AG04449 (cell line): ENCODE measurements at regions of chr5 and their contacts with region 1.

Region 1: GRCh38 chr5:114449860-114450421 is 88.1 kb downstream of the KCNN2 start:
- DNase-seq: no peak
- H3K4me3 ChIP-seq: no peak overlapping the region
- CTCF ChIP-seq: peak; percentile 92

Region 2: GRCh38 chr5:113612060-113612496 is 837.9 kb before region 1 on chr5:
- CTCF ChIA-PET with region 1: interaction called, 39 read pairs
- POLR2A ChIA-PET with region 1: no interaction called
- DNase-seq: no peak
- H3K4me3 ChIP-seq: no peak overlapping the region
- CTCF ChIP-seq: peak; percentile 31

Region 3: DNA sequence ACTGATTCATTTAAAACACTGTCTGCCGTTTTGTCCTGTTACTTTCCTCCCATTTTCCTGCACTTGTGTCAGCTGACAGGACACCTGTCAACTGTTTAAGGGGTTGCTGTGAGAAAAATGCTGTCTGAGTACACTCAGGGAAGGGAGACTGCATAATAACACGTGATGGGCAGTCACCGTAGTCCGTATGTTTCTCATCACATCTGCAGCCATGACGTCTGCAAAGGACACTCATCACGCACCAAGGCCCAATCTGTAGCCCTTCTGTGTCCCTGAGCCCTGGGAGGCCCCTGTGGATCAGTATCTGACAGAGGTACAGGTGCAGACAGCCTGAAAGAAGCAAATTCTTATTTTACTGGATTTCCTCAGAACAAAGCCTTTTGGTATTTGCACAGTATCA is 540.2 kb before region 1 on chr5:
- CTCF ChIA-PET with region 1: no interaction called
- POLR2A ChIA-PET with region 1: no interaction called
- DNase-seq: no peak
- H3K4me3 ChIP-seq: no peak overlapping the region
- CTCF ChIP-seq: no peak

Region 4: DNA sequence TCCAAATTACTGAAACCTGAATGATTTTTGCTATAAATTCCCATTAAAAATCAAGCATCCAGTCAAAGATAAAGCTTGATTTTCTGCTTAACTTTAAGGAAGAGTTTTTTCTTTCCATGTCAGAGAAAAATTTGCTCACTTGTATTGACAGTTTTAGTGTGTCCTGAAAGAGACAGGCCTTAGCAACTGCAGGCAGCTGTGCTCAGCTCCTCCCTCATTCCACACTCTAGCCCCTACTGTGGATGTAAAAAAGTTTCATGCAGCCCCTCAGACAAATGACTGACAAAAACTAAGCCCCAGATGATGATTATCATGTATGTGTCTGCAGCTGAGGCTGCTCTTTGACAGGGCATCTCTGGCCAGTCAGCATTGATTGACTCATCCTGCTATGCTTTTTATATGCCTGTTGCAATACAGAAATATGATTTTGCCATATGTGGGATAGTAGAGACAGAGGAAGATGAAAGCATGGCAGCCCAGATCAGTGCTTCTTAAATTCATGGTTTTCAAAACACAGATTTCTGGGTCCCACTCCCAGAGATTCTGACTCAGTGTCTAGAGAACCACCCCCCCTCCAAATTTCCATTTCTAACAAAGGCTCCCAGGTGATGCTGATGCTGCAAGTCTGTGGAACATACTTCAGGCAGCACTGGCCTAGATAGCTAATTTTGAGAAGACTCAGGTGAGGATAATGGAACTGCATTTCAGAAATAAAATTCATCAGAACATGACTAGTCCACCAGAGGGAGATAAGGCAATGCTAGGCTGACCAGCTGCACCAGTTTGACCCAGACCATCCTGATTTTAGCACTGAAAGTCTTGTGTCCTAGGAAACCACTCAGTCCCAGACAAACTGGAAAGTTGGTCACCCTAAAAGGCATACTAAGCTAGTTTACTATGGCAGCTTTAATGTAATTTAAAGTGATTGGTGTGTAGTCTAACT is 386.7 kb before region 1 on chr5:
- CTCF ChIA-PET with region 1: interaction called, 10 read pairs
- POLR2A ChIA-PET with region 1: no interaction called
- DNase-seq: no peak
- H3K4me3 ChIP-seq: no peak overlapping the region
- CTCF ChIP-seq: peak; percentile 19

Region 5: DNA sequence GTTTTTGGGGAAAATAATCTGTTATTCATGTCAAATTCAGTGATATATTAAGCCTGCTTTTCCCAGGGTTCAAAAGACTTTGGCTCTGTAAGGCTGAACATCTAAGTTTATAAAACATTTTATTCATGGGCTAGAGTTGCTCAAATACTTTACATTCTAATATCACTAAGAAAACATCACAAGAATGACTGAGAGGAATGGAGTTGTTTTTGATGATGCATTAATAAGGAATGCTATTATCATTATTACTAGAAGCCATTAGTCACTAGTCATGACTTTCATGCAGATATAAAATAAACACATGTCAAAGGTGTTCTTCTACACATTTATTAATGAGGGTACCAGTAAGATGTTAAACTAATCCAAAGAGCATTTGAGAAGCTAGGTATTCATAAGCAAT is 273.6 kb before region 1 on chr5:
- CTCF ChIA-PET with region 1: no interaction called
- POLR2A ChIA-PET with region 1: no interaction called
- DNase-seq: peak; percentile 34
- H3K4me3 ChIP-seq: no peak overlapping the region
- CTCF ChIP-seq: no peak

Region 6: DNA sequence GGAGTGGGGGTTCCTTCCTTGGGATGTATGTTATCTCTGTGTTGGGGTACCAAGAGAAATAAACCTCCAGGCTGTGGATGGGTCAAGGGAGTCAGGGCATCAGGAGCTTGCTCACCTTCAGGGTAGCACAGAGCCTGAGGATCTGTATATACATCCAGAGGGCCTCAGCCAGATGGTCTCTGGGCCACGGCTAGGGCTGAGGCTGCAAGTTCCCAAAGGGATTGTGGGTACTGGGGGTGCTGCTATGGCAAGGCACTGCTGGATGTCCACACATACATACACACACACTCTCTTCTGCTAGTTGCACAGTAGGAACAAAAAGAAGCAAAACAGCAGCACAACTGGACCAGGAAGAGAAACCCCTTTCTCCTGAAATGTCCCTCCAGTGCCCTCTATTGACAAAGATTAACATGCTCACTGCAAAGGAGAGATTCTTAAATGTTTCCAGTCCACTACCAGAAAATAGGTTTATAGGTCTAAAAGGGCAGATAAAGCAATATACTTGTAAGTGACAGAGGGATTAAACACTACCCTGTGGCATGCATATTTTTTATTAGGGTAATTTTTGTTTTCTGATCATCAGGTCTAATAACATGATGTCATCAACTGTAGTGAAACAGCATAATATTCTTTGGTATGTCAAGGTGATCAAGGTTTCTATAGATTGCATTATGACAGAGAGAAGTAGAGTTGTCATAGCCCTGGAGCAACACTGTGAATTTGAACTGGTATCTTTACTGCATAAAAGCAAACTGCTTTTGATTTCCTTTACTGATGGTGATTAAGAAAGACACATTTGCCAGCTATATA is 144.3 kb before region 1 on chr5:
- CTCF ChIA-PET with region 1: interaction called, 12 read pairs
- POLR2A ChIA-PET with region 1: no interaction called
- DNase-seq: no peak
- H3K4me3 ChIP-seq: no peak overlapping the region
- CTCF ChIP-seq: peak; percentile 67

Region 7: DNA sequence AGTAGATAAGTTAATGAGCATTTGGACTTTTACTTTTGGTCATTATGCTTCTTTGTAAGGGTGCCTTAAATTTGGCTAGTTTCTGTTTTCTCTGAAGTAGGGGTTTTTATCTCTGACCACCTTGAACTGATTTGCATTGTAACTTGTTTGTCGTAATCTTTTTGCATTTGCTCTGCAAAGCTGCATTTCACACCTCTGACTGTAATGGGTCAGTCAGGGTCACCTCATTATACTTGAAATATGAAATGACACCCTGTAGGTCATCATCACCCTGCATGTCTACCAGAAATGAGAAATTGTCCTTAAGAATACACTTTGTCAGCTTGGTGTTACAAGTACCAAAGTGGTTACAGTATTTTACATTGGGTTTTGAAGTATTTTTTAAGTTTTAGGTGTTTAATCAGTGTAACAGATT is 14.0 kb before region 1 on chr5:
- CTCF ChIA-PET with region 1: interaction called, 26 read pairs
- POLR2A ChIA-PET with region 1: no interaction called
- DNase-seq: no peak
- H3K4me3 ChIP-seq: no peak overlapping the region
- CTCF ChIP-seq: no peak

Region 8: GRCh38 chr5:114658194-114658593 is 208.3 kb after region 1 on chr5:
- CTCF ChIA-PET with region 1: no interaction called
- POLR2A ChIA-PET with region 1: no interaction called
- DNase-seq: no peak
- H3K4me3 ChIP-seq: no peak overlapping the region
- CTCF ChIP-seq: no peak